ENCODE measurements at regions of chr10 and their contacts with region 1.

Region 1: DNA sequence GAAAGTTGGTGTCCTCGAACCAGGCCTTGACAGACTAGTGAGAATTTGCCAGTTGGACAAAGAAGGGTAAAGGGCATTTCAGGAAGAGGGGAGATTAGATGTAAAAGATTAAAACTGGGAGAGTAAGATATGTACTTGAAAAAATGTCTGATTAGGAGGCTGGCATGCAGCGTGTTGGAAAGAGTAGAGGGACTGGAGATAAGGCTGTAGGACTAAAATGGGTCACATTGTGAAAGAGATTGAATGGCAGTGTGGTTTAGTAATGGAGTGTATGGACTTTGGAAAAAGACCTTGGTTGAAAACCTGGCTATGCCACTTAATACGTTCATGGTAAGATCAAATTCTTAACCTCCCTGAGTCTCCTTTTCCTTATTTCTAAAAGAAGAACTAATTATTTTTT is 14.1 kb downstream of the CREM start:
- DNase-seq: no peak
- H3K4me3 ChIP-seq: no peak overlapping the region
- H3K27ac ChIP-seq: no peak overlapping the region
- H3K4me1 ChIP-seq: no peaks in the 10 kb centered on the region
- H3K27me3 ChIP-seq: no peaks in the 10 kb centered on the region
- CTCF ChIP-seq: no peak
- POLR2A ChIP-seq: no peak

Region 2: DNA sequence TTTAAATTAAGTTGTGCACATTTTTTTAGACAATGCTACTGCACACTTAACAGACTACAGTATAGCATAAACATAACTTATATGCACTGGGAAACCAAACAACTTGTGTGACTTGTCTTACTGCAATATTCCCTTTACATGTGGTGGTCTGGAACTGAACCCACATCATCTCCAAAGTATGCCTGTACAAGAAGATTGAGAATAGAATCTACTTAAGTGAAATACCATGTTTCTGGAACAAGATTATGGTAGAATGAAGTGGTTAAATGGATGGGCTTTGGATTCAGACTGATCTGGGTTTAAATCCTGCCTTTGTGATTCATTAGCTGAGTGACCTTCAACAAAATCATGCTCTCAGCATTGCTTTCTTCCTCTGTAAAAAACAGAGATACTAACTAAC is 81.2 kb before region 1 on chr10:
- CTCF ChIA-PET with region 1: no interaction called
- POLR2A ChIA-PET with region 1: no interaction called
- dilution Hi-C with region 1: no loop called
- intact Hi-C with region 1: no loop called
- DNase-seq: no peak
- H3K4me3 ChIP-seq: no peak overlapping the region
- H3K27ac ChIP-seq: peak overlapping the region; percentile 97
- H3K4me1 ChIP-seq: peaks cover 43% of the 10 kb centered on the region
- H3K27me3 ChIP-seq: no peaks in the 10 kb centered on the region
- CTCF ChIP-seq: no peak
- POLR2A ChIP-seq: no peak

Region 3: DNA sequence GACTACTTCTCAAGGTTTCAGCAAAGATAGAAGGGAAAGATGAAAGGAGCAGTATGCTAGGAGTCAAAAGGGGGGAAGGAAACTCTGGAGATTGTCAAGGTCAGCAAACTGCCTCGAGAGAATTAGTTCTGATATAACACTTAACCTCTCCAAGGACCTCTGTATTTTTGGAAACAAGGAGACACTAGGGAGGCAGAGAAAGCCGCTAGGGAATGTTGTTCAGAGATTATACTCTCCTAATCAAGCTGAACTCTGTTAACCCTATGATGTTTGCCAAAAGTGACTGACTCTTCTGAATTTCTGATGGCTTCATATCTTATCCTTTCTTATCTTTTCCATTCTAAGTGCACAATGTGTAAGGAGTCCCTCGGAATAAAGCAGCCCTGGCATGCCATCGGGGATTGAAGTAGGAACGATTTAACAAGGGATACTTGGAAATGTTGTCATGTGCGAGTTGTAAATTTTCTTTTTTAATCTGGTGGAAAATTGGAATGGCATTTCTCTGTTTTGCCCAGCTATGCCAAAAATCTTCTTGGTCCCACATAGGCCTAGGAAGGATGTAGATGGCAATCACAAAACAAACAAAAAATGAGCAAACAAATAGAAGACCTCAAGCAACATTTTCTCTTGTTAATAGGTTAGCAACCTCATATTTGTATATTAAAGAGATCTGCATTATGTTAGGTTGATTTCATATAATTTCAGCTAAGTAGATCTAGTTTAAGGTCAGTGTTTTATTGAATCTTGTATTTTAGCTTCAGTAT is 13.2 kb after region 1 on chr10:
- CTCF ChIA-PET with region 1: interaction called, 12 read pairs
- POLR2A ChIA-PET with region 1: no interaction called
- dilution Hi-C with region 1: no loop called
- intact Hi-C with region 1: no loop called
- DNase-seq: no peak
- H3K4me3 ChIP-seq: no peak overlapping the region
- H3K27ac ChIP-seq: no peak overlapping the region
- H3K4me1 ChIP-seq: peaks cover 2% of the 10 kb centered on the region
- H3K27me3 ChIP-seq: no peaks in the 10 kb centered on the region
- CTCF ChIP-seq: no peak
- POLR2A ChIP-seq: no peak

Measured in endothelial cell of umbilical vein (primary cell).